Activated CD4-positive, alpha-beta memory T cell treated with anti-CD3 and anti-CD28 coated beads, Interleukin-2, amount 10 ng/mL, durations not matched to agents 7 days and 5 days (primary cell): ENCODE measurements at regions of chr1 and their contacts with region 1.

Region 1: GRCh38 chr1:53945433-53946251 is at the start of gene IFT25:
- DNase-seq: peak; percentile 98
- H3K4me3 Mint-ChIP-seq: peak within 1 kb of the TSS; percentile 96
- H3K27ac Mint-ChIP-seq: peak within 1 kb of the TSS; percentile 92
- H3K4me1 Mint-ChIP-seq: peaks cover 50% of the 10 kb centered on the region
- H3K27me3 Mint-ChIP-seq: no peaks in the 10 kb centered on the region
- total RNA-seq, gene IFT25: 60.2 to 63.2 TPM

Region 2: DNA sequence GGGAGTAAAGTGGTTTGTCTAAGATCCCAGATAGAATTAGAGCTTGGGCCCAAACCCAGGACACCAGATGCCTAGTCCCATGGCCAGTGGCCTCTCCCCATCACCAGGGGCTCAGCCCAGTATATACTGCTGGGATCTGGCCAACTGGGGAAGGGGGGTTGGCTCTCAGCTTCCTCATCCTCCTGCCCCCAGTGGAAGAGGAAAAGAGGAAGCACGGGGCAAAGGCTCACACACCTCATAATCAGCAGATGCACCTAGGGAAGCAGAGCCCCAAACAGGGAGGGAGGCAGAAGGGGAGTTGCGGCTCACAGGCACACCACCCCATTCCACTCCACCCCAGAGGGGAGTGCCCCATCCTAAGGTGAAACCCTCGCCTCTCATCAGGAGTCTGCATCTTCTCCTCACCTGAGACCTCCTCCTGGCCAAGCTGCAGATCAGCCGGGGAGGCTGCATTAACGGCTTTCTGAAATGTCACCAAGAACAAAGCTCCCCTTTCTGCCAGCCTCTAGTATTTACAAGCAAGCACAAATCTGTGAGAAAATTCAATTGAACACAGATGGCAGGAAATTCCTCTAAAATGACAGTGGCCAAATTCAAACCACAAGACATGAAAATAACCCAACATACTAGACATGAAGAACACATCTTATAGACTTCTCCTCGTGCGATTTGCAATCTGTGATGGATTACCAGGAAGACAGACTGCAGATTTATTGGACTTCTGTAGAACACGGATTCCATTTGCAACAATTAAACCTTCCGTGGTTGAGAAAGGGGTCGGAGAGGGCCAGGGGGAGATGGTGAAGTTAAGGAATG is 289.5 kb before region 1 on chr1:
- CTCF ChIA-PET with region 1: no interaction called
- POLR2A ChIA-PET with region 1: no interaction called
- DNase-seq: no peak
- H3K4me3 Mint-ChIP-seq: no peak overlapping the region
- H3K27ac Mint-ChIP-seq: no peak overlapping the region
- H3K4me1 Mint-ChIP-seq: no peaks in the 10 kb centered on the region
- H3K27me3 Mint-ChIP-seq: peaks cover 26% of the 10 kb centered on the region

Region 3: GRCh38 chr1:53799141-53799540 is 146.5 kb before region 1 on chr1:
- CTCF ChIA-PET with region 1: no interaction called
- POLR2A ChIA-PET with region 1: no interaction called
- DNase-seq: no peak
- H3K4me3 Mint-ChIP-seq: no peak overlapping the region
- H3K27ac Mint-ChIP-seq: no peak overlapping the region
- H3K4me1 Mint-ChIP-seq: peaks cover 2% of the 10 kb centered on the region
- H3K27me3 Mint-ChIP-seq: no peaks in the 10 kb centered on the region

Region 4: DNA sequence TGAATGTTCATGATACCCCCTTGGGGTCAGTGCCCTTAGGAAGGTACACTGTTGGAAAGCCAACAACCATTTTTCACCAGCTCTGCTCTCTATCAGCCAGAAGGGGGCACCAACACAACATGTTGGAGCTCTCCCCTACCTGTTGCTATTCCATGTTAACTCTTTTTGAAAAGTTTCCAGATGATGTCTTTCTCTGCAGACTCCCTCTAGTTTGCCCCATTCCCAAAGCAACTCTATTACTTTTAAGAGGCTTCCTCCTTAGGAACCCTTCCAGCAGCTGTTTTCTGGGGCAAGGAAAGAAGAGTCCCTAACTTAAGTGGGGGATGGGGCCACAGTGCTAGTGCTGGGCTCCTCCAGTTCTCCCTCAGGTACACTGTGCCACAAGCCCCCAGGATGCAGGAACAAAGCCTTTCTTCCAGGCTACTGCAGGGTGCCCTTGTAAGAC is 84.7 kb before region 1 on chr1:
- CTCF ChIA-PET with region 1: interaction called, 41 read pairs
- POLR2A ChIA-PET with region 1: interaction called, 3 read pairs
- DNase-seq: peak; percentile 53
- H3K4me3 Mint-ChIP-seq: no peak overlapping the region
- H3K27ac Mint-ChIP-seq: no peak overlapping the region
- H3K4me1 Mint-ChIP-seq: peaks cover 4% of the 10 kb centered on the region
- H3K27me3 Mint-ChIP-seq: no peaks in the 10 kb centered on the region

Region 5: DNA sequence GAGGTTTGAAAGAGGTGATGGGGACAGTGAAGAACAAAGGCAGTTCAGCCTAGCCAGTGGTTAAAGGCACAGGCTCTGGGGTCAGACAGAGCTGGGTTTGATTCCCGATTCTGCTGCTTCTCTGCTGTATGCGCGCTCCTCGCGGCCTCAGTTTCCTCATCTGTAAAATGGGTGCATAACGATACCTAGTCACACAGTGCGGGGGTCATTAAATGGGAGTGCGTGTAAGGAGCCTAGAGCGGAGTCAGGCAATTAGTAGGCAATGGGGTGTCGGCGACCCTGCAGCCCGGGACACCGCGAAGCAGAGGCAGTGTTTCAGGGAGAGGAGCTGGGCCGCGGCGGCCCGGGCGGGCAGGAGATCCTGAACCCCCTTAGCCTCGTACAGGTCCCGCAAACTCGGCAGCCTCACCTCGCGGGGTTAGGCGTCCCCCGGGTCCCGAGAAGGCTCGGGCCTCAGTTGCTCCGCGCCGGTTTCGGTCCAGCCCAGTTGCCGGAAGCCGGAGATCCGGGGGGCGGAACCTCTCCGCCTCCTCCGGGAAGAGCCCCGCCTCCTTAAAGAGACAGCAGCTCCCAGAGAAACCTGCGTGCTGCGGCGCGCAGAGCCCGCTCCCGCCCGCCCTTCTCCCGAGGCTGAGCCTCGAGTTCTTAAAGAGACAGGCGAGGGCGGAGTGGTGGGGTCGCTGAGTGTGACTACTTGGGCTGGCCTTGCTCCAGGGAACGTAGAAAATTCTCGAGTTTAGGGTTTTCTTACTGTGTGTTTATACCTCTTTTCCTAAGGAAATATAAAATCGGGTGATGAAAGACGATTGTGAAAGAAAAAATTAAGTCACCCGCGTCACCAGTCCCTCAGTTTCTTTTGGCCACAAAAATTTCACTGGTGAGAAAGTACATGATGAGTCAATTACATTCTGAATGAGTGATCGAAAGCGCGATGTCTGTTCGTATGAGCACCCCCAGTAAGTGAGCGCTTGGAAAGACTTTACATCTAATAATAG is 56.0 kb before region 1 on chr1 and contains the start of gene YIPF1:
- CTCF ChIA-PET with region 1: interaction called, 8 read pairs
- POLR2A ChIA-PET with region 1: interaction called, 25 read pairs
- DNase-seq: peak; percentile 91
- H3K4me3 Mint-ChIP-seq: peak within 1 kb of the TSS; percentile 94
- H3K27ac Mint-ChIP-seq: peak within 1 kb of the TSS; percentile 80
- H3K4me1 Mint-ChIP-seq: peaks cover 31% of the 10 kb centered on the region
- H3K27me3 Mint-ChIP-seq: peaks cover 3% of the 10 kb centered on the region
- total RNA-seq, gene YIPF1: 17.8 to 19.7 TPM

Region 6: DNA sequence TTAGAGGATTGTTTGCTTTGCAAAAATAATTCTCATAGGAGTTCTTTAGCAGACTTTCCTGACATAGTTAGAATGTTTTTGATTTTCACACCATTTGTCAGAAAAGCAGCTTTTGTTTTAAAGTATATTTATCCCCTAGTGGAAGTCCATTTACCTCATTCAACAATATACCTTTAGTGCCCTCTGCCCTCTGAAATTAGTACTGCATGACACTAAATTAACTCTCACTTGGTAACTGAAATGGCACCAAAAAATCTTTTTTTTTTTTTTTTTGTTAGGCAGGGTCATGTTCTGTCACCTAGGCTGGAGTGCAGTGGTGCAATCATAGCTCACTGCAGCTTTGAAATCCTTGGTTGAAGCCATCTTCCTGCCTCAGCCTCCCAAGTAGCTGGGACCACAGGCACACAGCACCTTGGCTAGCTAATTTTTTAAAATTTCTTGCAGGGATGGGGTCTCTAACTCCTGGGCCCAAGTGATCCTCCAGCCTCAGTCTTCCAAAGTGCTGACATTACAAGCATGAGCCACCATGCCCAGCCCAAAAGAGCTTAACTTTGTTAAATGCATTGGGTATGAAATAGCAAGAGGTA is 14.1 kb after region 1 on chr1:
- CTCF ChIA-PET with region 1: interaction called, 40 read pairs
- POLR2A ChIA-PET with region 1: interaction called, 11 read pairs
- DNase-seq: no peak
- H3K4me3 Mint-ChIP-seq: no peak overlapping the region
- H3K27ac Mint-ChIP-seq: no peak overlapping the region
- H3K4me1 Mint-ChIP-seq: peaks cover 23% of the 10 kb centered on the region
- H3K27me3 Mint-ChIP-seq: no peaks in the 10 kb centered on the region

Region 7: DNA sequence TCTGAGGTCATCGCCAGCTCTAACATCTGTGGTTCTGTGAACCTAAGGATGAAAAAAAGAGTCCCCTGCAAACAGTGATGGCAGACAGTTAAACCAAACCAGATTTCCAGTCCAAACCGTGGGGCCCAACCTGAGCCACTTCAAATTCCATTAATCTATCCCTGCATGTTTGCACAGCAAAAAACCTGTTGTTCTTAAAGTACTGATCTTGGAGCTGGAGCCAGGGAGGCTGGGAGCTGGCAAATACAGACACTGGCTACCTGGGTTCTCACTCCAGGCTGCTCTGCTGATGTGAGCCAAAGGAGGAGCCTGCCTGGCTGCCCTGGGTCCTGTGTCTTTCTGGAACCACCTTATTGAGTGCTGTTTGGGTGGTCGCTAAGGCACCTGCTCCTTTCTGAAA is 55.9 kb after region 1 on chr1:
- CTCF ChIA-PET with region 1: no interaction called
- POLR2A ChIA-PET with region 1: no interaction called
- DNase-seq: no peak
- H3K4me3 Mint-ChIP-seq: no peak overlapping the region
- H3K27ac Mint-ChIP-seq: no peak overlapping the region
- H3K4me1 Mint-ChIP-seq: no peaks in the 10 kb centered on the region
- H3K27me3 Mint-ChIP-seq: peaks cover 2% of the 10 kb centered on the region